Endothelial cell of umbilical vein (primary cell): ENCODE measurements at regions of chr22 and their contacts with region 1.

Region 1: DNA sequence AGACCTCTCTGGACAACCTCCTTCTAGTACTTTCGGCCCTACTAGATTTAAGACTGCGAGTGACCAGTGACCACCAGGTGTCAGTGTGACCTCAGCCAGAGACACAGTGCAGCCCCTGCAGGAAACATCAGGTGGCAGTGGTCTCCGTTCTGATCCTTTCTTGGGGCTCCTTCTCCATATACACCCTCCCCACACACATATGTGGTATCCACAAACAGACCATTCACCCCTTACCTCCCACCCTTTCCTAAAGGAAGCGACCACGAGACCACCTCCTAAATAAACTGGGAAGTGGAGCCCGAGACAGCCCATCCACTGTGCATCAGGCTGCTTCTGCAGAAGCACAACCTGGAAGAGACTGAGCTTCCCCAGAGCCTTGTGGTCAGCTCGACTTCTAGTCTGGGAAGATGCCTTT is 38.5 kb upstream of the CYP2D6 start:
- DNase-seq: peak; percentile 81
- H3K4me3 ChIP-seq: no peak overlapping the region
- H3K27ac ChIP-seq: no peak overlapping the region
- H3K4me1 ChIP-seq: peaks cover 11% of the 10 kb centered on the region
- H3K27me3 ChIP-seq: no peaks in the 10 kb centered on the region
- CTCF ChIP-seq: peak; percentile 91 to 97
- POLR2A ChIP-seq: no peak

Region 2: DNA sequence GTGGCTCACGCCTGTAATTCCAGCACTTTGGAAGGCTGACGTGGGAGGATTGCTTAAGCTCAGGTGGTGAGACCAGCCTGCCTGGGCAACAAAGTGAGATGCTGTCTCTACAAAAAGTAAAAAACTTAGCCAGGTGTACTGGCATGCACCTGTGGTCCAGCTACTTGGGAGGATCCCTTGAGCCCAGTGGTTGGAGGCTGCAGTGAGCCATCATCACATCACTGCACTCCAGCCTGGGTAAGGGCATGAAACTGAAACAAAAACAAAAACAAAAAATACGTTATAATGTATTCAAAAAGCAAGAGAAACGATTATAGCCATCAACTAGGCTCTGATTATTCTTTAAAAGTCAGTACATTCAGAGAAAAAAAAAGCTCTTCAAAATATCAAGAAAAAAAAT is 38.9 kb after region 1 on chr22:
- CTCF ChIA-PET with region 1: no interaction called
- POLR2A ChIA-PET with region 1: no interaction called
- dilution Hi-C with region 1: no loop called
- intact Hi-C with region 1: no loop called
- DNase-seq: no peak
- H3K4me3 ChIP-seq: no peak overlapping the region
- H3K27ac ChIP-seq: no peak overlapping the region
- H3K4me1 ChIP-seq: no peaks in the 10 kb centered on the region
- H3K27me3 ChIP-seq: no peaks in the 10 kb centered on the region
- CTCF ChIP-seq: no peak
- POLR2A ChIP-seq: no peak

Region 3: GRCh38 chr22:42229455-42230149 is 60.5 kb after region 1 on chr22:
- CTCF ChIA-PET with region 1: no interaction called
- POLR2A ChIA-PET with region 1: no interaction called
- dilution Hi-C with region 1: no loop called
- intact Hi-C with region 1: loop called (anchors 1 kb)
- DNase-seq: peak; percentile 6
- H3K4me3 ChIP-seq: no peak overlapping the region
- H3K27ac ChIP-seq: no peak overlapping the region
- H3K4me1 ChIP-seq: no peaks in the 10 kb centered on the region
- H3K27me3 ChIP-seq: no peaks in the 10 kb centered on the region
- CTCF ChIP-seq: no peak
- POLR2A ChIP-seq: no peak

Region 4: DNA sequence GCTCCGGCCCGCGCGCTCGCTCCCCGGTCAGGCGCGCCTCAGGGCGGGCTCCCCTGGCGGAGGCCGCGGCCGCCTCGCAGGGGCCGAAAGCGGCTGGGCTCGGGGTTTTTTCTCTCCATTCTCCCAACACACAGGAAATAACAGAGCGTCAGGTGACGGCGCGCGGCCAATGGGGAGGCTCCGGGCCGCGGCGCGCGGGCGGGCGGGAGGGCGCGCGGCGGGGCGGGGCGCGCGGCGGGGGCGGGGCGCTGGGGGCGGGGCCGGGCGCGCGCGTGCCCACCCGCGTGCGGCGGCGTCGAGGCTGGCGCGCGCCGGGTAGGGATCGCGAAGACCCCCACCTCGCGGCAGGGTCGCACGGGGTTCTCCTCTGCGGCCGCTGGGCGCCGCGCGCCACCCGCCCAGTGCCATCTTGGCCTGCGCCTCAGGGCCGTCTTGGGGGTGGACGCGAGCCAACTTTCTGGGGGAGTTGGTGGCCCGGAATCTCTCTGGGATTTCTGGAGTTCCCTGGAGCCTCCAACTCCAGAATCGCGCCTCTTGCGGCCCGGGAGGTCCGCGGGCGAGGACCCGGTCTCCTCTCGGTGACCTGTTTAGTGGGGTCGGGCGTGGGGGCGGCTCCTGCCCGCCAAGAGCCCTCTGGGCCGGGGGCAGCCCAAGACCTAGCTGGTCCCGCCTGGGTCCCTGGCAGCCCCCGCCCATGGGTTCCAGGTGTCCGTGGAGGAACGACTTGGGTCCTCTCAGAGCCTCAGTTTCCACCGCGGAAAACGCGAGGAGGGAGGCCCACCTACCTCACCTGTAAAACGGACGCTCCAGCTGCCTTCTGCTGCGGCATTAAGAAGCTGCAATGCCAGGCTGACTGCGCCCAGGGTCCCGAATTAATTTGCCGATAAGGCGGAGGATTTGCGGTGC is 101.7 kb after region 1 on chr22 and contains the start of gene TCF20:
- CTCF ChIA-PET with region 1: interaction called, 4 read pairs
- POLR2A ChIA-PET with region 1: no interaction called
- dilution Hi-C with region 1: no loop called
- intact Hi-C with region 1: loop called (anchors 5 kb)
- DNase-seq: peak; percentile 56
- H3K4me3 ChIP-seq: peak within 1 kb of the TSS; percentile 61 to 99 (median 74)
- H3K27ac ChIP-seq: peak within 1 kb of the TSS; percentile 48
- H3K4me1 ChIP-seq: peaks cover 7% of the 10 kb centered on the region
- H3K27me3 ChIP-seq: no peaks in the 10 kb centered on the region
- CTCF ChIP-seq: no peak
- POLR2A ChIP-seq: no peak
- total RNA-seq, gene TCF20: 36.7 and 38.3 TPM in 2 replicates

Region 5: DNA sequence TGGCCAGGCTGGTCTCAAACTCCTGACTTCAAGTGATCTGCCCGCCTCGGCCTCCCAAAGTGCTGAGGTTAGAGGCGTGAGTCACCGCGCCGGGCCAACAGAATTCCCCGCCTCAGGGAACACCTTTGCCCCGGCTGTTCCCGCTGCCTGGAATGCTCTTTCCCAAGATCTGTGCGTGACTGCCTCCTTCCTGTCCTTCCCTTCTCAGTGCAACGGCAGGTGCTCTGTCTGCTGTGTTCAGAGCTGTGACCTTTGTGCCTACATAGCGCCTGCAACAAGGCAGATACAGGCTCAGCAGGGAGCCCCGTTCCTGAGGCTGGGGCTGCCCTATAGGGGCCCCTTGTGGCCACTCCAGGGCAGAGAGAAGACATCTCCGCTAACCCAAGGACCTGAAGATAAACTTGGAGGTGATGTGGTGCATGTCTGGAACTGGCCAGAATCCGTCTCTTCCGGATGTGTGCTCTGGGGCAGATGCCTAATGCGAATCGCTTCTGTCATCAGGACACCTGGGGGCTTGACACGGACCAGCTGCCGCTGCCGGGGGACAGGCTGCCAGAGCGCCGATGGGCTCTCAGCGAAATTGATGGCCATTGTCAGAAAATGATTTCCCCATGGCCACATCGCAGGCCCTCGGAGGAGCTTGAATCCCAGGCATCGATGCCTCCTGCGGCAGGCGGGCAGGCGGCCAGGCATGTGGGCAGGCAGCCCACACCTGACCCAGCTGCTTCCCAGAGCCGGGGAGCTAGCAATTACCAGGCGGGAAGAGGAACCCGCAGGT is 144.9 kb after region 1 on chr22:
- CTCF ChIA-PET with region 1: interaction called, 7 read pairs
- POLR2A ChIA-PET with region 1: no interaction called
- dilution Hi-C with region 1: no loop called
- intact Hi-C with region 1: loop called (anchors 1 kb)
- DNase-seq: peak; percentile 15
- H3K4me3 ChIP-seq: no peak overlapping the region
- H3K27ac ChIP-seq: no peak overlapping the region
- H3K4me1 ChIP-seq: no peaks in the 10 kb centered on the region
- H3K27me3 ChIP-seq: peaks cover 0 to 3% of the 10 kb centered on the region in 2 experiments
- CTCF ChIP-seq: peak; percentile 13 to 52
- POLR2A ChIP-seq: no peak